ENCODE measurements at regions of chr3 and their contacts with region 1.

Region 1: GRCh38 chr3:133608388-133608787 is 34.9 kb downstream of the CDV3 start:
- DNase-seq: no peak
- ATAC-seq: no peak
- H3K4me3 ChIP-seq: no peak overlapping the region
- H3K27ac ChIP-seq: no peak overlapping the region
- H3K4me1 ChIP-seq: no peaks in the 10 kb centered on the region
- H3K27me3 ChIP-seq: no peaks in the 10 kb centered on the region
- CTCF ChIP-seq: no peak
- EP300 ChIP-seq: no peak
- POLR2A ChIP-seq: no peak
- RAD21 ChIP-seq: no peak

Region 2: GRCh38 chr3:133443649-133444422 is 164.6 kb before region 1 on chr3:
- CTCF ChIA-PET with region 1: no interaction called
- POLR2A ChIA-PET with region 1: no interaction called
- RAD21 ChIA-PET with region 1: no interaction called
- SMC1A ChIA-PET with region 1: no interaction called
- in situ Hi-C with region 1: no loop called
- intact Hi-C with region 1: no loop called
- DNase-seq: no peak
- ATAC-seq: no peak
- H3K4me3 ChIP-seq: no peak overlapping the region
- H3K27ac ChIP-seq: peak overlapping the region; percentile 41
- H3K4me1 ChIP-seq: peaks cover 61% of the 10 kb centered on the region
- H3K27me3 ChIP-seq: no peaks in the 10 kb centered on the region
- CTCF ChIP-seq: peak in 1 of 3 experiments; percentile 16; a peak in 1 of 6 replicates
- EP300 ChIP-seq: no peak
- POLR2A ChIP-seq: no peak
- RAD21 ChIP-seq: peak; percentile 56; the same call in 1 of the 2 replicates

Region 3: GRCh38 chr3:133620066-133620784 is 11.8 kb after region 1 on chr3:
- CTCF ChIA-PET with region 1: interaction called, 3 read pairs
- POLR2A ChIA-PET with region 1: interaction called, 3 read pairs
- RAD21 ChIA-PET with region 1: no interaction called
- SMC1A ChIA-PET with region 1: interaction called, 5 read pairs
- in situ Hi-C with region 1: no loop called
- intact Hi-C with region 1: loop called (anchors 2 kb)
- DNase-seq: peak; percentile 94
- ATAC-seq: peak; percentile 99
- H3K4me3 ChIP-seq: no peak overlapping the region
- H3K27ac ChIP-seq: peak overlapping the region; percentile 56; the same call in 1 of the 2 replicates
- H3K4me1 ChIP-seq: peaks cover 20% of the 10 kb centered on the region
- H3K27me3 ChIP-seq: no peaks in the 10 kb centered on the region
- CTCF ChIP-seq: no peak
- EP300 ChIP-seq: no peak
- POLR2A ChIP-seq: no peak
- RAD21 ChIP-seq: no peak

Measured in GM12878 (cell line).